ENCODE measurements at regions of chr14 and their contacts with region 1.

Region 1: GRCh38 chr14:104094709-104095438 is 9.4 kb downstream of the ASPG start:
- DNase-seq: peak; percentile 46
- H3K4me3 ChIP-seq: no peak overlapping the region
- H3K27ac ChIP-seq: no peak overlapping the region
- H3K4me1 ChIP-seq: no peaks in the 10 kb centered on the region
- H3K27me3 ChIP-seq: no peaks in the 10 kb centered on the region
- CTCF ChIP-seq: peak; percentile 85 to 97
- POLR2A ChIP-seq: no peak

Region 2: DNA sequence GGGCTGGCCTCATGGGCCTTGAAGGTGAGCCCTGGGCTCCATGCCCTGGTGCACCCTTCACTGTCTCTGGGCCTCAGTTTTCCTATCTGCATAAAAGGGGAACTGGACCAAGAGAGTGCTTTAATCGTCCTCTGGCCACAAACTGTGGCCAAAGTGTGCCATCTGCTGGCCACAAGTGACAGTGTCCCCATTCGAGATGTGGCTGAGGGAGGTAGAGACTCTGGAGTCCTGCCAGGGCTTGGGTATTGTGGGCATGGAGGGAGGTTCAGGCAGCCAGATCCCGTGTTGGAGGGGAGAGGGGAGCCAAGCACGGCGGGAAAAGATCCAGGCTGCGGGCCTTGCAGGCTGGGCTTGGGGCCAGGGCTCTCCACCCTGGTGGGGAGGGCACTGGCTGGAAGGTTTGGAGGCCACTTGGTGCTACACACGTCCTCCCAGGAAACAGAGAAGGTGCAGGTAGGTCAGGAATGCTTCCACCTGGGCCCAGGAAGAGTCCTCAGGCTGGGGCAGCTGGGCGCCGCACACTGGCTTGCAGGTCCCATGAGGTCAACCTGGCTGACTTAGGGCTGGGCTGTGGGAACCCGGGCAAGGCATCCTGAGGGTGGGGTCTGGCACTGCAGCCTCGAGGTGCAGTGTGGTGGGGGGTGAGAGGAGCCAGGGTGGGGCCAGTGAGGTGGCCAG is 36.2 kb after region 1 on chr14:
- CTCF ChIA-PET with region 1: interaction called, 3 read pairs
- POLR2A ChIA-PET with region 1: no interaction called
- dilution Hi-C with region 1: no loop called
- intact Hi-C with region 1: loop called (anchors 1 kb)
- DNase-seq: peak; percentile 29
- H3K4me3 ChIP-seq: no peak overlapping the region
- H3K27ac ChIP-seq: no peak overlapping the region
- H3K4me1 ChIP-seq: peaks cover 3% of the 10 kb centered on the region
- H3K27me3 ChIP-seq: peaks cover 11 to 13% of the 10 kb centered on the region in 2 experiments
- CTCF ChIP-seq: peak; percentile 57 to 69
- POLR2A ChIP-seq: no peak

Region 3: GRCh38 chr14:104639889-104640548 is 545.1 kb after region 1 on chr14:
- CTCF ChIA-PET with region 1: interaction called, 11 read pairs
- POLR2A ChIA-PET with region 1: no interaction called
- dilution Hi-C with region 1: no loop called
- intact Hi-C with region 1: loop called (anchors 1 kb)
- DNase-seq: peak; percentile 55
- H3K4me3 ChIP-seq: no peak overlapping the region
- H3K27ac ChIP-seq: no peak overlapping the region
- H3K4me1 ChIP-seq: no peaks in the 10 kb centered on the region
- H3K27me3 ChIP-seq: peaks cover 0 to under 1% of the 10 kb centered on the region in 2 experiments
- CTCF ChIP-seq: peak; percentile 94 to 99
- POLR2A ChIP-seq: no peak

Measured in endothelial cell of umbilical vein (primary cell).